ENCODE measurements at regions of chr4 and their contacts with region 1.

Region 1: GRCh38 chr4:88284439-88285234 is at the start of gene PPM1K:
- DNase-seq: peak; percentile 100
- total RNA-seq, gene PPM1K: 210 TPM

Region 2: GRCh38 chr4:88007304-88008121 is 277.1 kb before region 1 on chr4 and contains the start of gene PKD2:
- intact Hi-C with region 1: loop called (anchors 5 kb)
- DNase-seq: peak; percentile 94
- total RNA-seq, gene PKD2: 25.1 TPM

Region 3: DNA sequence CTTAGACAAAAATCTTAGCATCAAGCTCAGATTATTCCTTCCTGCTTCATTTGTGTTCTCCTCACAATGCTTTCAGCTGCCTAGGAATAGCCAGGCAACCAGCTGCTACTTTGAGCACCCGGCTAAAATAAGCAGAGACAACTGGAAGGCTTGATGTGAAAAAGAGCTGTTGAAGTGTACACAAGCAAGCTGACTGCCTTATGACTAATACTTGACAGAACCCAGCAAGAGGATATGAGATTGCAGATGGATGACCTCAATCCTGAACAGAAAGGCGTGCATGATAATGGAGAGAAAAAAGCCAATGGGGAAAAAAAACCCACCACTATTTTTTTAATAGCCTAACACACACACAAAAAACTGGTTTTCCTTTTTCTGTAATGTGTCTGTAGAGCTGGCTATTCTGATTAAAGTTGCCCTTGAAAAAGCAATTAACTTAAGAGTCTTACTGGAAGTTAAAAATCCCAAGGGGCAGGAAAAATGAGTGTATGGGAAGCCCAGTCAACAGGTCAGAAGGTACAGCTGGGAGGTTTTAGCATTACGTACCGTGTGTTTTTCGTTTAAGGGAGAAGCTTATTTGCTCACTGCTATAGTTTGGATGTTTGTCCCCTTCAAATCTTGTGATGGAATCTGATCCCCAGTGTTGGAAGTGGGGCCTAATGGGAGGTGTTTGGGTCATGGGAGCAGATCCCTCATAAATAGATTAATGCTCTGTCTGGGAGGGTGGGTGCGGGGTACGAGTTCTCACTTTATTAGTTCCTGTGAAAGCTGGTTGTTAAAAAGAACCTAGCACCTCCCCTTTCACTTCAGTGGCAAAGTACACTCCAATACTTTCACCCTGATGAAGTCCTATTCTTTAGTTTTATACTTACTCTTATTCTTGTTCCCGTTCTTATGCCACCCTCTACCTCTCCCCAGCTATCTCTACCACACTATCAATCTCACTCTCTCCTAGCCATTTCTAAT is 56.9 kb after region 1 on chr4:
- intact Hi-C with region 1: loop called (anchors 2 kb)
- DNase-seq: no peak

Region 4: GRCh38 chr4:88456757-88457306 is 172.2 kb after region 1 on chr4 and contains the start of gene HERC5:
- intact Hi-C with region 1: loop called (anchors 5 kb)
- DNase-seq: peak; percentile 95
- total RNA-seq, gene HERC5: 1.9 TPM

Region 5: GRCh38 chr4:88591787-88592599 is 307.4 kb after region 1 on chr4 and contains the start of gene HERC3:
- intact Hi-C with region 1: loop called (anchors 5 kb)
- DNase-seq: peak; percentile 97
- total RNA-seq, gene HERC3: 46.3 TPM

Region 6: DNA sequence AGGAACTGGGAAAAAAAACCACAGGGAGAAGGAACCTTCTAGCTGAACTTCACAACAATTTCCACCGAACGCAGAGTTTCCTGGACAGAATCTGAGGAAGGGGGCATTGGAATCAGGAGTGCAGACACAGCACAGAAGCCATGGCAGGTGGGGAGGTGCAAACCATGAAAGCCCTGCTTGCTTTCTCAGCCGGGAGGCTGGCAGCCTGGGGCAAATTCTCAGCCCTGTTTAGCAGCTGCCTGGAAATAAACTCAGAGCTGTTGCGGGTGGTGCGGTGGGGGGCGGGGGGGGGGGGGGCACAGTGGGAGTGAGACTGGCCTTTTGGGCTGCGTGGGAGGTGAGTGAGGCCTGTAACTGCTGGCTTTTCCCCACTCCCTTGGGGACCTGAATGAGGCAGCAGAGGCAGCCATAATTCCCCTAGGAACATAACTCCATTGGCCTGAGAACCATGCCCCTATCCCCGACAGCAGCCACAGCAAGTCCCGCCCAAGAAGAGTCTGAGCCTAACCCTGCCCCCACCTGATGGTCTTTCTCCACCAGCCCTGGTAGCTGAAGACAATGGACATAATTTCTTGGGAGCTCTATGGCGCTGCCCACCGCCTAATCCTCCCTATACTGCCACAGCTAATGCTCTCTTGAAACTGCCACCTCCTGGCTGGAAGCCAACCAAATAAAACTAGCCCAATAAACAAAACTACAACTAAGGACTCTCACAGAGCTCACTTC is 596.0 kb after region 1 on chr4:
- intact Hi-C with region 1: no loop called
- DNase-seq: no peak

Measured in cardiac septum (tissue), 1 donor.